HepG2 (cell line): ENCODE measurements at regions of chr1 and their contacts with region 1.

Region 1: DNA sequence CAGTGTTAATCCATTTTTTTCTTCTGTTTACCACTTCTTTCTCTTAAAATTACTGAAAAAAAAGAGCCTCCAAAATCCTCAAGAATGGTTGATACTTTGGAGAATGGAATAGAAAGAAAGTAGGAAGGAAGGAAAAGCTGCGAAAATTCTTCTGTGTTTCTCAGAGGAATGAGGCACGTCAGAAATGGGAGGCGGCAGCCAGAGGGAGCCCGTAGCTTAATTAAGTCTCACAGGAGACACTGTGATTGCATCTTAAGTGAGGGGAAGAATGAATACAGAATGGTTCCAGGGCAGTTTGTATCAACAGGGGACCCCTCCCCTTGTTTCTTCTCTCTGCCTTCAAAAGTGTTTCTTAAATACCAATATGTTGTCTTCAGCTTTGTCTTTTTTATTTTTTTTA is 1099.5 kb downstream of the PLA2G4A start:
- DNase-seq: peak; percentile 29
- ATAC-seq: peak; percentile 83
- H3K4me3 ChIP-seq: no peak overlapping the region
- H3K27ac ChIP-seq: no peak overlapping the region
- H3K4me1 ChIP-seq: peaks cover 6% of the 10 kb centered on the region
- H3K27me3 ChIP-seq: no peaks in the 10 kb centered on the region
- CTCF ChIP-seq: peak; percentile 69
- EP300 ChIP-seq: no peak
- POLR2A ChIP-seq: no peak
- RAD21 ChIP-seq: no peak

Region 2: GRCh38 chr1:187762118-187762517 is 166.2 kb before region 1 on chr1:
- CTCF ChIA-PET with region 1: no interaction called
- POLR2A ChIA-PET with region 1: no interaction called
- in situ Hi-C with region 1: no loop called
- intact Hi-C with region 1: no loop called
- DNase-seq: no peak
- ATAC-seq: no peak
- H3K4me3 ChIP-seq: no peak overlapping the region
- H3K27ac ChIP-seq: no peak overlapping the region
- H3K4me1 ChIP-seq: no peaks in the 10 kb centered on the region
- H3K27me3 ChIP-seq: no peaks in the 10 kb centered on the region
- CTCF ChIP-seq: no peak
- EP300 ChIP-seq: no peak
- POLR2A ChIP-seq: no peak
- RAD21 ChIP-seq: no peak

Region 3: GRCh38 chr1:187999973-188000372 is 71.7 kb after region 1 on chr1:
- CTCF ChIA-PET with region 1: no interaction called
- POLR2A ChIA-PET with region 1: no interaction called
- in situ Hi-C with region 1: no loop called
- intact Hi-C with region 1: loop called (anchors 2 kb)
- DNase-seq: no peak
- ATAC-seq: no peak
- H3K4me3 ChIP-seq: no peak overlapping the region
- H3K27ac ChIP-seq: no peak overlapping the region
- H3K4me1 ChIP-seq: no peaks in the 10 kb centered on the region
- H3K27me3 ChIP-seq: no peaks in the 10 kb centered on the region
- CTCF ChIP-seq: peak; percentile 23; the same call in 1 of the 2 replicates
- EP300 ChIP-seq: no peak
- POLR2A ChIP-seq: no peak
- RAD21 ChIP-seq: no peak

Region 4: GRCh38 chr1:188594542-188595235 is 666.4 kb after region 1 on chr1:
- CTCF ChIA-PET with region 1: no interaction called
- POLR2A ChIA-PET with region 1: no interaction called
- in situ Hi-C with region 1: no loop called
- intact Hi-C with region 1: loop called (anchors 5 kb)
- DNase-seq: no peak
- ATAC-seq: no peak
- H3K4me3 ChIP-seq: no peak overlapping the region
- H3K27ac ChIP-seq: no peak overlapping the region
- H3K4me1 ChIP-seq: no peaks in the 10 kb centered on the region
- H3K27me3 ChIP-seq: no peaks in the 10 kb centered on the region
- CTCF ChIP-seq: 0 out of 2 replicates have a peak, but pooled peaks have one; percentile 3
- EP300 ChIP-seq: no peak
- POLR2A ChIP-seq: no peak
- RAD21 ChIP-seq: no peak

Region 5: GRCh38 chr1:188794969-188795368 is 866.7 kb after region 1 on chr1:
- CTCF ChIA-PET with region 1: no interaction called
- POLR2A ChIA-PET with region 1: no interaction called
- in situ Hi-C with region 1: no loop called
- intact Hi-C with region 1: no loop called
- DNase-seq: no peak
- ATAC-seq: no peak
- H3K4me3 ChIP-seq: no peak overlapping the region
- H3K27ac ChIP-seq: no peak overlapping the region
- H3K4me1 ChIP-seq: no peaks in the 10 kb centered on the region
- H3K27me3 ChIP-seq: no peaks in the 10 kb centered on the region
- CTCF ChIP-seq: no peak
- EP300 ChIP-seq: no peak
- POLR2A ChIP-seq: no peak
- RAD21 ChIP-seq: no peak

Region 6: DNA sequence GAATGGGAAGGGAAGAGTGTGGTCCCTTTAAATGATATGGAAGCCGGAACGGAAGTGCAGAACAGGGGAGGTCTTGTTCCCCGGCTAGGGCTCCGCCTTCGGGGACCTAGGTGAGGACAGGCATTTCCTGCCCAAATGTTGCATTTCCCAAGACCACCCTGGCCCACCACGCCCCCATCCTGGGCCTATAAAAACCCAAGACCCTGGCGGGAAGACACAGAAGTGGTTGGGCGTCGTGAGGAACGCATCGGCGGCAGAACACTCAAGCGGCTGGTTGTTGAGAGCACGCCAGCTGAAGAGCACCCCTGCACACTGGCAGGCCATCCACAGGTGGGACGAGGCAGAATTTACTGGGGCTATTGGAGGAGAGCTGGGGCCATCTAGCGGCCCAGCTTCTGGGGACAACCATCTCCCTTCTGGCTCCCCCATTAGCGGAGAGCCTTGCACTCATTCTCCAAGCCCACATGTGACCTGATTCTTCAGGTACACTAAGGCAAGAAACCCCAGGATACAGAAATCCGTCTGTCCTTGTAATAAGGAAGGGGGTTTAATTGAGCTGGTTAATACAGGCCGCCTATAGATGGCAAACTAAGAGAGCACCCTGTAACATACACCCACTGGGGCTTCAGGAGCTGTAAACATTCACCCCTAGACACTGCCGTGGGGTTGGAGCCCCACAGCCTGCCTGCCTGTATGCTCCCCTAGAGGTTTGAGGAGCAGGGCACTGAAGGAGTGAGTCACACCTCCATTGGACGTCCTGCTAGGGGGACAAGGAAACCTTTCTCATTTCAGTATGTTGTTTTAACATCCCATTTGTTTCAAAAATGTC is 1221.5 kb after region 1 on chr1:
- CTCF ChIA-PET with region 1: no interaction called
- POLR2A ChIA-PET with region 1: no interaction called
- in situ Hi-C with region 1: no loop called
- intact Hi-C with region 1: loop called (anchors 1 kb)
- DNase-seq: peak; percentile 40
- ATAC-seq: peak; percentile 100
- H3K4me3 ChIP-seq: peak overlapping the region in 2 of 3 experiments; percentile 6 to 13; a peak in 3 of 6 replicates
- H3K27ac ChIP-seq: no peak overlapping the region
- H3K4me1 ChIP-seq: no peaks in the 10 kb centered on the region
- H3K27me3 ChIP-seq: no peaks in the 10 kb centered on the region
- CTCF ChIP-seq: peak; percentile 68
- EP300 ChIP-seq: no peak
- POLR2A ChIP-seq: peak in 1 of 2 experiments; percentile 39; a peak in 1 of 4 replicates
- RAD21 ChIP-seq: peak; percentile 61